Transverse colon (tissue), 4 donors: ENCODE measurements at regions of chr4 and their contacts with region 1.

Region 1: DNA sequence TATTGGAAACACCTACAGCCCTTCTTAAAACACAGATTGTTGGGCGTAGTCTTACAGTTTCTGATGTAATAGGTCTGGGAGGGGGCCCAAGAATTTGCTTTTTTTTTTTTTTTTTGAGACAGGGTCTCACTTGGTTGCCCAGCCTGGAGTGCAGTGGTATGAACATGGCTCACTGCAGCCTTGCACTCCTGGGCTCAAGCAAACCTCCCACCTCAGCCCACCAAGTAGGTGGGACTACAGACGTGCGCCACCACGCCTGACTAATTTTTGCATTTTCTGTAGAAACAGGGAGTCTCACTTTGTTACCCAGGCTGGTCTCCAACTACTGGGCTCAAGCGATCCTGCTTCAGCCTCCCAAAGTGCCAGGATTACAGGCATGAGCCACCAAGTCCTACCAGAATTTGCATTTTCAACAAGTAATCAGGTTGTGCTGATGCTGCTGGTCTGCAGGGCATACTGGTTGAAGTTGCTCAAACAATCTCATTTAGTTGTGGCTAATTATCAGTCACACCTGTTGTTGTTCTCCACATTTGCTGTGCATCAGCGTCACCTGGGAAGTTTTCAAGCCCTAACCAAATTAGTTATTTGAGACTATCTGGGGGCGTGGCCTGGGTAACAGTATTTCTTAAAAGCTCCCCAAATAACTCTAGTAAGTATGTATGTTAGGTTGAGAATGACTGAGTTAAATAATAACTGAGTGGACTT is 14.0 kb downstream of the TMEM154 start:
- DNase-seq: peak; percentile 50
- H3K4me3 ChIP-seq: no peak overlapping the region
- H3K27ac ChIP-seq: peak overlapping the region in 1 of 4 donors; percentile 38
- H3K4me1 ChIP-seq: peaks cover 0 to 11% (median 0%) of the 10 kb centered on the region in 4 donors
- H3K27me3 ChIP-seq: no peaks in the 10 kb centered on the region
- CTCF ChIP-seq: no peak
- EP300 ChIP-seq: no peak
- POLR2A ChIP-seq: no peak

Region 2: DNA sequence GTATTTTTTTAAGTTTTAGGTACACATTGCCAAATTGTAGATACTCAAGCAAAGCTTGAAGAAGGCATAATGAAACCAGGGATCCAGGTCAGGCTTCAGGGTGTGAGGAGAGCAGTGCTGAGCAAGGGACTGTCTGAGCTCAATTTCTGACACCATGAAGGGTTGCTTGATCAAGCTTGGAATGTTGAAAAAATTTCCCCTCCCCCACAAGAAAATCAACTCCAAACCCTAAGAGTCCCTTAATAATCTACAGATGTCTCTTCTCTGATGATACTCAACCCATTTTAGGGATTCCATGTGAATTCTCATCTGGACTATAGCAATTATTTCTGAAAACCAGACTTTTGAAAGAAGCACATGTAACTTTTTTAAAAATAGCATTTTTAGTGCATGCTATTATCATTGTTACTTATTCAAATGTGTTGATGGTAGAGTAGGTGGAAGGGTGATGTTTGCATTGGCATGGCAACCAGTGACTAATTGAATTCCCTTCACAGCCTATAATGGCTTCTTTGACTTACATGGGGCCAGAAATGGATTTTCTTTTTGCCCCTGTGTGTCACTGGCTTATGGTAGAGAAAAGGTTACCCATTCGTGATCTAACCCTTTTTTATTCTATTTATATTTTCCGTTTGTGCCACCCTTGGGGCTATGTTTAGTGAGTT is 381.9 kb before region 1 on chr4:
- in situ Hi-C with region 1: no loop called
- intact Hi-C with region 1: no loop called
- DNase-seq: no peak
- H3K4me3 ChIP-seq: no peak overlapping the region
- H3K27ac ChIP-seq: no peak overlapping the region
- H3K4me1 ChIP-seq: peaks cover 0 to 6% (median 0%) of the 10 kb centered on the region in 4 donors
- H3K27me3 ChIP-seq: no peaks in the 10 kb centered on the region
- CTCF ChIP-seq: no peak
- EP300 ChIP-seq: no peak
- POLR2A ChIP-seq: no peak

Region 3: DNA sequence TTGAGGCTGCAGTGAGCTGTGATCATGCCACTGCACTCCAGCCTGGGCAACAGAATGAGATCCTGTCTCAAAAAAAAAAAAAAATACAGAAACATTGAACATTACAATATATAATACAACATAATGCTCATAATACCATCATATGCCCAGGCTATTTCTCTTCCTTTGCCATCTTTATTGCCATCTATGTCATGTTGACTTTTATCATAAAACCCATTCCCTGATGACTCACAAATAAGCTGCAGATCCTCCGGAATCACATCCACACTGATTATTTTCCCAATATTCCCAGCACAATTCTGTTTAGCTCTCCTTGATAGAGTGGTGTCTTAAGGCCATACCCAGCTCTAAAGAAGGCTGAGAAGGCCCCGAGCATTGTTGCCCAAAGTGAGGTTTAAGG is 120.8 kb before region 1 on chr4:
- in situ Hi-C with region 1: no loop called
- intact Hi-C with region 1: loop called (anchors 5 kb)
- DNase-seq: no peak
- H3K4me3 ChIP-seq: no peak overlapping the region
- H3K27ac ChIP-seq: no peak overlapping the region
- H3K4me1 ChIP-seq: no peaks in the 10 kb centered on the region
- H3K27me3 ChIP-seq: no peaks in the 10 kb centered on the region
- CTCF ChIP-seq: no peak
- EP300 ChIP-seq: no peak
- POLR2A ChIP-seq: no peak

Region 4: GRCh38 chr4:154444958-154445357 is 1779.1 kb after region 1 on chr4:
- in situ Hi-C with region 1: no loop called
- intact Hi-C with region 1: loop called (anchors 5 kb)
- DNase-seq: no peak
- H3K4me3 ChIP-seq: no peak overlapping the region
- H3K27ac ChIP-seq: no peak overlapping the region
- H3K4me1 ChIP-seq: no peaks in the 10 kb centered on the region
- H3K27me3 ChIP-seq: no peaks in the 10 kb centered on the region
- CTCF ChIP-seq: no peak
- EP300 ChIP-seq: no peak
- POLR2A ChIP-seq: no peak